ENCODE measurements at regions of chr13 and their contacts with region 1.

Region 1: DNA sequence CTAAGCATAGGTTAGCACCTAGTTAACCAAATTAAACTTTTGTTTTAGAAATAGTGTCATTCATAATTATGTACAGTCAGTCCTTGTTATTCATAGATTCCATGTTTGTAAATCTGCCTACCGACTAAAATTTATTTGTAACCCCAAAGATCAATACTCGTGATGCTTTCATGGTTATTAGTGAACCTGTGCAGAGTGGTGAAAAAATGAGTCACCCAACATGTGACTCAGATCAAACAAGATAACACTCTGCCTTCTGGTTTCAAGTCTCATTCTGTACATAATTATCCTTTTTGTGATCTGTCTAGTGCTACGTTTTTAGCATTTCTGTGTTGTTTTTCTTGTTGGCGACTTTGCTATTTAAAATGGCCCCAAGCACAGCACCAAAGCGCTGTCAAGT is 274.7 kb downstream of the SUCLA2 start:
- DNase-seq: no peak
- H3K4me3 ChIP-seq: no peak overlapping the region
- H3K27ac ChIP-seq: no peak overlapping the region
- H3K4me1 ChIP-seq: no peaks in the 10 kb centered on the region
- H3K27me3 ChIP-seq: no peaks in the 10 kb centered on the region
- CTCF ChIP-seq: no peak

Region 2: DNA sequence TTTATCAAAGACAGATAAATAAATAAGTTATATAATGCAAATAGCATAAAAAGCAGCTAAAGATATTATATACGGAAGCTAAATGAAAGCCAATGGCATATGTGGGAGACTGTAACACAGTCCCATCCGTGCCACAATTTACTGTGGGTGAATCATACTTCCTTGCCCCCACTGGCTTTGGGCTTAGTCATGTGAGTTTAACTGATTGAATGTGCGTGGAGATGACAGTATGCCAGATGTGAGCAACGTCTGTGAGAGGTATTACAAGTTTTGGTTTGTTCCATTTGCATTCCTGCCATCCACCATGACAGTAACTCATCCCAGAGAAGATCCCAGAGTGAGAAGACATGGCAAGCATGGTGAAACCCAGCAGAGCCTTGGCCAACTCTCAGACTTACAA is 65.3 kb before region 1 on chr13:
- CTCF ChIA-PET with region 1: no interaction called
- POLR2A ChIA-PET with region 1: no interaction called
- intact Hi-C with region 1: loop called (anchors 10 kb)
- DNase-seq: peak; percentile 7
- H3K4me3 ChIP-seq: no peak overlapping the region
- H3K27ac ChIP-seq: no peak overlapping the region
- H3K4me1 ChIP-seq: no peaks in the 10 kb centered on the region
- H3K27me3 ChIP-seq: peaks cover 17% of the 10 kb centered on the region
- CTCF ChIP-seq: no peak

Measured in A673 (cell line).